ENCODE measurements at regions of chr18 and their contacts with region 1.

Region 1: GRCh38 chr18:55322178-55322735 is 265.7 kb downstream of the TCF4 start:
- DNase-seq: peak; percentile 88
- ATAC-seq: peak; percentile 88

Region 2: DNA sequence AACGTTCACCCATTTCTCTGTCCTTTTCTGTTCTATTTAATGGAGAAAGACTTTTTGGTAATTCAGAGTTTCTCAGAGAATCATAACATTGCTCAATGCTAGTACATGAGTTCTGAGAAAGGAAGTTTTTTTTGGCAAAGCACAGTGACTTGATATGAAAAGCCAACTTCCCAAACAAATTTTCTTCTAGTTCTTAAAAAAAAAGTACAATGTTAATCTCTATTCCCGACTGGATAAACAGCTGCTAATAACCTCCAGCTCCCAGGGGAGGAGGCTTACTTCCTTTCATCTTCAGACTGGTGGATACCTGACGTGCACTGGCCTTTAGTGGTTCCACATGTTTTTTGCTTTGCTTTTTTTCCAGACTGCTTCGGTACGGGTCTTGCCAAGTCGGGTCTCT is 78.4 kb before region 1 on chr18:
- intact Hi-C with region 1: loop called (anchors 5 kb)
- DNase-seq: no peak
- ATAC-seq: peak; percentile 78

Region 3: GRCh38 chr18:55265984-55266383 is 56.3 kb before region 1 on chr18:
- intact Hi-C with region 1: loop called (anchors 10 kb)
- DNase-seq: no peak
- ATAC-seq: peak; percentile 44

Region 4: DNA sequence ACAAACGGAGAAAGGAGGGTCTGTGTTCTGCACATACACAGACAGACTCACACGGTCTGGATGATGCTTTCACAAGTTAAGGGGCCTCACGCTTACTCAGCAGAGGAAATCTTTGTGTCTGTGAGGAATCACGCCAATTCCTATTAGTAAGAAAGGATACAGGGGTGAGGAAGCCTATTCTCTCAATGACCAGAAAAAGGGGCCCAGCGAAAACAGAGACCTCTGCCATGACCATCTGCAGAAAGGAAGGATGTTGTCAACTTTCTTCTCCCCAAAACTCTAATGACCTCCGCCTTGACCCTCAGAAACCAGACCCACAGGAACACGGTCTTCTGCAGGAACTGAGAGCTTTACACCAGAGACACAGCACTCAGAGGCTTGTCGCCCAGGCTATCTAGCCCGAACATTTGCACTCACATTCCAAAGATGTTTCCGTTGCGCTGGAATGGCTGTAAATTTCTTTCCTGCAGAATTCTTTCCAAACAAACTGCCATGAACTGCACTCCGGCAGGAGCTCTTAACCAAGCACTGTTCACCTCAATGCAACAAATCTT is 79.5 kb after region 1 on chr18:
- intact Hi-C with region 1: loop called (anchors 5 kb)
- DNase-seq: no peak
- ATAC-seq: peak; percentile 44

Region 5: DNA sequence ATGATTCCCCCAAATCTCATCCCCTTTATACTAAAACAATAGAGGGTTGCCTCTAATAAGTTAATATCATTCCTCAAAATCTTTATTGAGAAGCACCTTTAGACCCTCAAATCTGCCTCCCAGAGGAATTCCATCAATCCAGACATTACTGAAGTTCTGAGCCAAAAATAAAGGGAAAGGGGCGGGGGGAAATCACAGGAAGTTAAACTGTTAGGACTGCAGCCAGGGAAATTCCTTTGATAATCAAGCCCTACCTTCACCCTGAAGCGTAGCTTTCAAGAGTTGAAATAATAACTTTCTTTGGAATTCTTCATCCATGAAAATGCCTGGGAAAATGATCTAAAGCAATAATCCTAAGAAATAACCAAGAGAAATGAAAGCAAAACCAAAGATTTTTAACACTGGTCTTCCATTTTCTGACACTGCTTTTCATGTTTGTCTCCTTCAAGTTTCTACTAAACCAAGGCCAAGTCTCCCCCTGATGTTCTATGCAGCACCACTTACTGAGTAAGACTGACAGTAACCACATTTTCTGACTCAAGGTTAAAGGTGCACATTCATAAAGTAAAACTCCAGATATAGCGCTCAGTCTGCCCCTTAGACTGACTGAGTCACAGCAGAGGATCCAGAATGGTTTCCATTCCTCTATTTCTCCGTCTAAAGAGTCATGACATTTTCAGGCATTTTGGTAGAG is 187.5 kb after region 1 on chr18:
- intact Hi-C with region 1: loop called (anchors 10 kb)
- DNase-seq: no peak
- ATAC-seq: no peak

Region 6: DNA sequence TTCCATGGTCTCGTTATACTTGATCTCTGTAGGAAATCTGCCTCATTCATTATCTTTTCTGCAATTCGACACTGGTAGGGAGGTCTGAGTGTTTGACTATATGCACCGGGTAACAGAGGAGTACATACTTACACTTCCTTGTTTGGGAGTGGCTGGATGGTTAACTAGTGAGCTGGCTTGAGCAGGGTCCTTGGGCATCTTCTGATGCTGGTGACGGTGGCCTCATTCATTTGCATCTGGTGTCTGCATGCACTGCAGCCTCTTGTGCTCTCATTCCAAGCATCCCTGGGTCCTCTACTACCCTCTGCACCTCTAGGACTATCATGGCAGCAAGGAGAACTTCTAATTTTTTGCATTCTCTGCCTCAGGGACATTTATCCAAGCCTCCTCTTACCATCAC is 365.8 kb after region 1 on chr18:
- intact Hi-C with region 1: no loop called
- DNase-seq: no peak
- ATAC-seq: no peak

Measured in Right ventricle myocardium inferior (tissue), 1 donor.